ENCODE measurements at regions of chr10 and their contacts with region 1.

Region 1: GRCh38 chr10:30783939-30784500 is 154.5 kb upstream of the LYZL2 start:
- DNase-seq: peak; percentile 65
- ATAC-seq: peak; percentile 63
- H3K4me3 ChIP-seq: no peak overlapping the region
- H3K27ac ChIP-seq: no peak overlapping the region
- H3K4me1 ChIP-seq: peaks cover 16% of the 10 kb centered on the region
- H3K27me3 ChIP-seq: no peaks in the 10 kb centered on the region
- CTCF ChIP-seq: peak; percentile 82

Region 2: DNA sequence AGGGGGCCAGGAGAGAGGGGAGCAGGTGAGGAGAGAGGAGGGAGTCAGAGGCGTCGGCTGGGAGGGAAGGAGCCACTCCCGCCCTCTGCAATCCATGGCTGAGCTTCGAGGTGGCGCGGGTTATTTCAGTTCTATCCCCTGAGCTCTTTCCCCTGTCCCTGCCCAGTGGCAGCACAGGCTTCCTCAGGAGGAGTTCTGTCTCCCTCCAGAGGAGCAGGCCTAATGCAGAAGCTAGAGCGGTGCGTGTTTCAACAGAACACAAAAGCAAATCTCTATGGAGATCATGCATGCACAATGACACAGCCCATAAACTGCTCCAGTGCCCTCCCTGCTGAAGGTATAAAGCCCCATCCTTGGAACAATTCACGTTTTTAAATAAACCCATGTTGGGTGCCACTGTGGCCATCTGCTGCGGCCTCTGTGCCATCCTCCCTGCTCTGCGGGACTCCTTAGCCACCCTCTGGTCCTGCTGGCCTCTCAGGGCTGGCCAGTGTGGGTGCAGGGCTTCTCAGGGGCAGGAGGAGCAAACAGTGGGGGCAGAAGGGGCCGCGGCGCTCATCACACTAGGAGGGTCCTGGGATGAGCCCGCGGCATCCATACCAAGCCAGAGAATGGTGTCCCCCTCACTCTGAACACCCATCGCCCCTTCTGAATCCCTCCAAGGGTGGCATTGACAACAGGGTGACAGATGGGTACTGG is 38.1 kb after region 1 on chr10:
- CTCF ChIA-PET with region 1: interaction called, 13 read pairs
- POLR2A ChIA-PET with region 1: no interaction called
- intact Hi-C with region 1: no loop called
- DNase-seq: no peak
- ATAC-seq: no peak
- H3K4me3 ChIP-seq: no peak overlapping the region
- H3K27ac ChIP-seq: no peak overlapping the region
- H3K4me1 ChIP-seq: peaks cover 5% of the 10 kb centered on the region; the same call in 1 of the 2 replicates
- H3K27me3 ChIP-seq: no peaks in the 10 kb centered on the region
- CTCF ChIP-seq: no peak

Region 3: GRCh38 chr10:30873411-30873810 is 89.4 kb after region 1 on chr10:
- CTCF ChIA-PET with region 1: interaction called, 10 read pairs
- POLR2A ChIA-PET with region 1: interaction called, 5 read pairs
- intact Hi-C with region 1: no loop called
- DNase-seq: no peak
- ATAC-seq: no peak
- H3K4me3 ChIP-seq: no peak overlapping the region
- H3K27ac ChIP-seq: no peak overlapping the region
- H3K4me1 ChIP-seq: no peaks in the 10 kb centered on the region
- H3K27me3 ChIP-seq: no peaks in the 10 kb centered on the region
- CTCF ChIP-seq: no peak

Region 4: DNA sequence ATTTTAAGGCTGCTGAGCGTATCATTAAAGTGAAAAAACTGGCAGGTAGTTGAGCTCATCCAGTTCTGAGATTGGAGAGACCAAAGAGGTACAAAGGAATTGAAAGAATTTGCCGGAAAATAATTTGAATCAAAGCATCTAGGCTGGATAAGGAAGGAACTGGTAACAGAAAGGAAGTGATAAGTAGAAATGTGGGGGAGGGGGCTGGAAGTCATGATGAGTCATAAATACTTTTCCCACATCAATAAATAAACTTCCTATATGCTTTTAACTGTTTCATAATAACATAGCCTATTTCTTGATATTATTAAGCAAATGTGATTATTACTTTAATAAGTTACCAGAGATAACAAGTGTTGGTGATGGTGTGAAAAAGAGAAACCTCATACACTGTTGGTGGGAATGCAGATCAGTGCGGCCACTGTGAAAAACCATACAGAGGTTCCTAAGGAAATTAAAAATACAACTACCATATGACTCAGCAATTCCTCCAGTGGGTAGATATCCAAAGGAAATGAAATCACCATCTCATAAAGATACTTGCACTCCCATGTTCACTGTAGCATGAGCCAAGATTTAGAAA is 220.7 kb after region 1 on chr10:
- CTCF ChIA-PET with region 1: no interaction called
- POLR2A ChIA-PET with region 1: no interaction called
- intact Hi-C with region 1: no loop called
- DNase-seq: peak; percentile 86
- ATAC-seq: peak; percentile 73
- H3K4me3 ChIP-seq: peak overlapping the region; percentile 34; the same call in 1 of the 2 replicates
- H3K27ac ChIP-seq: peak overlapping the region; percentile 93
- H3K4me1 ChIP-seq: peaks cover 55% of the 10 kb centered on the region
- H3K27me3 ChIP-seq: no peaks in the 10 kb centered on the region
- CTCF ChIP-seq: no peak

Region 5: DNA sequence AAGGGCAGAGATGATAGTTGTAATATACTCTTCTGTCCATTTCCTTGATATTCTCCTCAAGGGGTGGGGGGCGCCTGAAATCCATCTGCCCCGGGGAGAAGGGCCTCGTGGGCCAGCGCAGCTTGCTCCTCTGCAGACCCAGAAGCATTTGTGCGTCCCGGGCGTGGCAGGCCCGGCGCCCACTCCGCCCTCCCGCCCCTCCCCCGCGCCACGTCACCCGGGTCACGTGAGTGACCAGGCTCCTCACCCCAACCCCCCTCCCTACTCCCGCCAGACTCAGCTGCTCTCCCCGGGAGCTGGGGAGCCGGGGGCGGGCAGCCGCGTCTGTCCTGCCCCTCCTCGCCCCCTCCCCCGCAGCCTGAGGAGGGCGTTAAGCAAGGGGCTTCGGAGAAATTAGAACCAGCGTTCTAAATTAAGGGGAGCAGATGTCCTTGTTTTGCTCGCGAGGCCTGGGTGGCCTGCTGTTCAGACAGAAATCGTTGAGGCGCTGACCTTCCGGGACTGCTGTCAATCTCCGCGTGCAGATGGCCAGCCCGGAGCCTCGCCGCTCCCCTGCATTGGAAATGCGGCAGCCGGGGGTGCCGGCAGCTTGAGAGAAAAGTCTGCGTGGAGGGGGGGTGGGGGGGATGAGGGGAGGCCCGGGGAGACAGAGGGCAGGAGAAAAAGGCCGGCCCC is 349.7 kb after region 1 on chr10:
- CTCF ChIA-PET with region 1: no interaction called
- POLR2A ChIA-PET with region 1: no interaction called
- intact Hi-C with region 1: loop called (anchors 5 kb)
- DNase-seq: no peak
- ATAC-seq: no peak
- H3K4me3 ChIP-seq: no peak overlapping the region
- H3K27ac ChIP-seq: no peak overlapping the region
- H3K4me1 ChIP-seq: peaks cover 11% of the 10 kb centered on the region; the same call in 1 of the 2 replicates
- H3K27me3 ChIP-seq: no peaks in the 10 kb centered on the region
- CTCF ChIP-seq: no peak